ENCODE measurements at regions of chr1 and their contacts with region 1.

Region 1: GRCh38 chr1:15617175-15617880 is at the start of gene DDI2:
- DNase-seq: peak; percentile 99
- H3K4me3 Mint-ChIP-seq: peak within 1 kb of the TSS; percentile 90
- H3K27ac Mint-ChIP-seq: peak within 1 kb of the TSS; percentile 94
- H3K4me1 Mint-ChIP-seq: peaks cover 32% of the 10 kb centered on the region
- H3K27me3 Mint-ChIP-seq: no peaks in the 10 kb centered on the region
- total RNA-seq, gene DDI2: 50.5 and 53.0 TPM in 2 replicates

Region 2: DNA sequence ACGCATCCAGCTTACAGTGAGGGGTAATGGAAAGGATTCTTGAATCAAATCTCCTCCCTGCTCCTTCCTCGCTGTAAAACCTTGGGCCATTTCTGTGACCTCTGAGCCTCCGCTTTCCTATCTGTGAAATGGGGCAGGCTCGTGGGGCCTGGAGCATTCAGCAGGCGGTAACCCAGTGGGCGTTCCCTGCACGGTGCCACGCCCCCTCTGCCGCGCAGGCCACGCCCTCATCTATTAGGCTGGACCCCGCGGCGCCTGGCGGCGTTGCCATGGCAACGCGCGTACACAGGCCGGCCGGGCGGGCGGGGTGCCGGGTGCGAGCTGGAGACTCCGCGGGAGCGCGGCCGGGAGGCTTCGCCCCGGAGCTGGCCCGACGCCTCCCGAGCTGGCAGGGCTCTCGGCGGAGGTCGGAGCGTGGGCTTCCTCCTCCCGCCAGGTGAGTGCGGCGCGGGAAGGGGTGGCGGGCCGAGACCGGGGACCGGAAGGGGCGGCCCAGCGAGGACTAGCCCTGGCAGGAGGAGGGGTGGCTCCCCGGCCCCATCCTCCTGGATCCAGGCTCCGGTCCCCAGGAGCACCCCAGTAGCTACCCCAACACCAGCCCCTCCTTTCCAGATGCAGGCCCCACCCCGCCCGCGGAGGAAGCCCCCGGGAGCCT is 370.2 kb before region 1 on chr1 and contains the start of gene FHAD1:
- intact Hi-C with region 1: loop called (anchors 5 kb)
- DNase-seq: peak; percentile 83
- H3K4me3 Mint-ChIP-seq: peak within 1 kb of the TSS; percentile 69
- H3K27ac Mint-ChIP-seq: peak within 1 kb of the TSS; percentile 83
- H3K4me1 Mint-ChIP-seq: peaks cover 46% of the 10 kb centered on the region
- H3K27me3 Mint-ChIP-seq: peaks cover 68% of the 10 kb centered on the region
- total RNA-seq, gene FHAD1: not detected in 2 replicates

Region 3: DNA sequence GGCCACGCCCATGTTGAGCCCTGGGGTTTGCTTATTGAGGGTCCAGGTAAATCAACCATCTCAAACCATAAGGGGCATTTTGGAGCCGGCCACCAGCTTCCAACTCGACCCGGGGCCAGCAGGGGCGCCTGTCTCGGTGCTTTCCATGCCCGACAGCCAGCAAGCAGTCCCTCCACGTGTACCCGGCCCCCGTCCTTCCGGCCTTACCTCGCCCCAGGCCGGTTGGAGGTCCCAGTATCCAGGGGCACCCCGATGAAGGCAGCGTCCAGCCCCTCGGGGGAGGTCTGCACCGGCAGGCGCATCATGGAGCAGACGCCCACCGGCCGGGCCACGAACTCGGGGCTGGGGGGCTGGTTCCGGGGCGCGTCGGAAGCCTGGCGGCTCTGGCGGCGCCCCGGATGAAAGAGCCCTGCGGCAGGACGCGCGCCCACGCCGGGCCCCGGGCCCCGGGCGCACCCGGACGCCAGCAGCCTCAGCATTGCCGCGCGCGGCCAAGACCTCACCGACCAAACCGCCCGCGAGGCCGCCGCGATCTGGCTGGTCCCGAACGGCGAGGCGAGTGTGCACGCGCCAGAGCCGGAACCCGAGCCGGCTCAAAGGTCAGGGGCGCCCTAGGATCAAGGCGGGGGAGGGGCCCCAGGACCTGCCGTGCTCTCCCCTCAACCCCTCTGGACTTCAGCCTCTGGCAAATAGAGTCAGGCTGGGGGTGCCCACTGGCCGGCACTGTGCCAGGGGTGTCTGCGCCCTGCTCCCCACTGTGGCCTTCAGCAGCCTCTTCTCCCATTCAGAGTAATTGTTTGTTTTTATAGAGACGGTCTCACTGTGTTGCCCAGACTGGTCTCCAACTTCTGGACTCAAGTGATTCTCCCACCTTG is 32.6 kb before region 1 on chr1 and contains the start of gene AGMAT:
- intact Hi-C with region 1: loop called (anchors 2 kb)
- DNase-seq: peak; percentile 88
- H3K4me3 Mint-ChIP-seq: peak within 1 kb of the TSS; percentile 91
- H3K27ac Mint-ChIP-seq: peak within 1 kb of the TSS; percentile 90
- H3K4me1 Mint-ChIP-seq: peaks cover 22% of the 10 kb centered on the region
- H3K27me3 Mint-ChIP-seq: no peaks in the 10 kb centered on the region
- total RNA-seq, gene AGMAT: 31.0 and 31.5 TPM in 2 replicates

Region 4: DNA sequence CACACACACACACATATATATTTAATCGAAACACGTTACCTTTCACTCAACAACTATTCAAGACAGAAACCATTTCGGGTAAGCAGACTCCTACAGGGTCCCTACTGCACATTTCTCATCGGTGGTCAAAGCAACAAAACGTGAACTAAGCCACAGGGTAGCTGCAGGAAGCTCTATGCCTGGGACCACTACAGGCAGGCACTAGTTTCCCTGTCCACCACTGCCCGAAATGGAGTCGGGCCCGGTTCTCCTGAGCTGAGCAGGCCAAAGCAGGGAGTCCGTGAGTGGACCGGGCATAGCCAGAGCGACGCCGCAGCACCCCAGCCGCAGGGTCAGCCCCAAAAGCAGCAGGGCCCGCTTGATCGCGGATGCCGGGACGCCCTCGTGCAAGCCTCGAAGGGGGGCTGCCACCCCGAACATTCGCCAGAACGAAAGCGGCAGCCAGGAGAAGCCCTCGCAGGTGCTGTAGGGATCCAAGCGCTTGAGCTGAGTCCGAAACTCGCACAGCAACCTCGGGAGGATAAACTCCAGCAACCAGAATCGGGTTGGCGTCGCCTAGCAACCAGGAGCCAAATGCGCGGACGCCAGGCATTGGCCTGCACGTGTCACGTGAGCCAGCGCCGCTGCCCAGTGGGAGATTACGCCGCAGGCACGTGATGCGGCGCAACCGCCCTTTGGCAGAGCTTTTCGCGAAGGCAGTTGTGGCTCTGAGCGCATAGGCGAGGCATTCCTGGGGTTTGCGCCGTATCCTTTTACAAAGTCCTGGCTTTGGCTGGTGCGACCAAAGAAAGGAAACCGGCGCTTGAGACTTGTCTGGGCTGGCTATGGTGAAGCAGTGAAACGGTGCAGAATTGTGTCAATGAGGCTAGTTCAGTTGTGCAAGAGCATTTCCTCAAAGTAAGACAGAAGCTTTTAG is 14.0 kb before region 1 on chr1:
- intact Hi-C with region 1: loop called (anchors 1 kb)
- DNase-seq: peak; percentile 98
- H3K4me3 Mint-ChIP-seq: peak overlapping the region; percentile 78
- H3K27ac Mint-ChIP-seq: peak overlapping the region; percentile 43
- H3K4me1 Mint-ChIP-seq: peaks cover 10% of the 10 kb centered on the region
- H3K27me3 Mint-ChIP-seq: peaks cover 5% of the 10 kb centered on the region

Region 5: GRCh38 chr1:15684468-15685291 is 67.4 kb after region 1 on chr1:
- intact Hi-C with region 1: loop called (anchors 1 kb)
- DNase-seq: peak; percentile 82
- H3K4me3 Mint-ChIP-seq: peak overlapping the region; percentile 92
- H3K27ac Mint-ChIP-seq: peak overlapping the region; percentile 85
- H3K4me1 Mint-ChIP-seq: peaks cover 35% of the 10 kb centered on the region
- H3K27me3 Mint-ChIP-seq: no peaks in the 10 kb centered on the region

Region 6: DNA sequence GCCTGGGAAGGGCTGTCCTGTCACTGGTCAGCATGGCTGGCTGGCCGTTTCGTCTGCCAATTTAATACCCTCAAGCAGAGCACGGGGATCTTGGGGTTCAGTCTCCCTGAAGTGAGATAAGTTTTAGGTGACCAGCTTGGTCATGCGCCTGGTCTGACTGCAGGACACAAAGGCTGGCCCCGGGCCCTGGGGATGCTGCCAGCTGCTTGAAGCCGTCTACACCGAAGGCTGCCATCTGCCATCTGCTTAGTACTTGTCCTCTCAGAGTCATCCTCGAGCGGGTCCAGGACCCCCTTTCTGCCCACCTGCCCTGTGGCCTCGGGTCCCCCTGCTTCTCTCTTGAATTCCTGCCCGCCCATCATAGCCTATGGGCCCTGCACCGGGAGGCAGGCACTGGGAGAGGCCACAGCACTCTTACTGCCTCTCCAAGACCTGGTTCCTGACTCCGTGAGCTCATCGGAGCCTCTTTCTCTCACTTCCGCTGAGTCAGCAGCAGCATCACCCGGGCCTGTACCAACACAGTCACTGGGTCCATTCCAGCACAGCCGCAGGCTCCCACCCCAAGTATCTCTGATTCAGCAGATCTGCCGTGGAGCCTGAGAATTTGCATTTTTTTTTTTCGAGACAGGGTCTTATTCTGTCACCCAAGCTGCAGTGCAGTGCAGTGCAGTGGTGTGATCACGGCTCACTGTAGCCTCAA is 148.3 kb after region 1 on chr1:
- intact Hi-C with region 1: no loop called
- DNase-seq: no peak
- H3K4me3 Mint-ChIP-seq: no peak overlapping the region
- H3K27ac Mint-ChIP-seq: no peak overlapping the region
- H3K4me1 Mint-ChIP-seq: no peaks in the 10 kb centered on the region
- H3K27me3 Mint-ChIP-seq: peaks cover 22% of the 10 kb centered on the region

Region 7: GRCh38 chr1:15975805-15976680 is 358.7 kb after region 1 on chr1 and contains the start of gene ZBTB17:
- intact Hi-C with region 1: loop called (anchors 5 kb)
- DNase-seq: peak; percentile 99
- H3K4me3 Mint-ChIP-seq: peak within 1 kb of the TSS; percentile 90
- H3K27ac Mint-ChIP-seq: peak within 1 kb of the TSS; percentile 93
- H3K4me1 Mint-ChIP-seq: peaks cover 40% of the 10 kb centered on the region
- H3K27me3 Mint-ChIP-seq: no peaks in the 10 kb centered on the region
- total RNA-seq, gene ZBTB17: 60.9 and 63.9 TPM in 2 replicates

Measured in activated CD4-positive, alpha-beta T cell treated with anti-CD3 and anti-CD28 coated beads, Interleukin-2, amount 10 ng/mL, durations not matched to agents 24 days and 14 days (primary cell).